ENCODE measurements at regions of chr16 and their contacts with region 1.

Region 1: DNA sequence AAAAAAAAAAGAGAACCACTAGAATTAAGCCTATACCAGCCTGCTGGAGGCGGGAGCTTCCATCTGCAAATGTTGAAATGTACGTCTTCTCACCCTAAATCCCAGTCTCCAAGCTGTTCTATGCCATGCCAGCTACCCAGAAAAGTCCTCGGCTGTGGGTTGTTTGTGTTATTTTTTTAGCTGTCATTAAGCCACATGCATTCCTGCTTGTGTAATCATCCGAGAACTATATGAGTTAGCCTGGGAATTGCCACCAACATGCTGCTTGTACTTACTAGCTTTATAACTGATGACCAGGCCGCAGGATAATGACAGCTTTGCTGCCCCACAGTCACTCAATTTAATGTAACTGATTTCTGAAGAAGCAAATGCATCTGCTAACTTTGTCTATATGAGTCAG is 313.9 kb upstream of the SALL1 start:
- DNase-seq: no peak
- H3K4me3 ChIP-seq: no peak overlapping the region
- H3K27ac ChIP-seq: no peak overlapping the region
- H3K4me1 ChIP-seq: no peaks in the 10 kb centered on the region
- H3K27me3 ChIP-seq: no peaks in the 10 kb centered on the region
- CTCF ChIP-seq: no peak
- EP300 ChIP-seq: no peak
- POLR2A ChIP-seq: no peak

Region 2: GRCh38 chr16:51359141-51359955 is 105.6 kb before region 1 on chr16:
- in situ Hi-C with region 1: loop called in 1 of 4 experiments (anchors 25 kb)
- intact Hi-C with region 1: no loop called
- DNase-seq: peak; percentile 7
- H3K4me3 ChIP-seq: no peak overlapping the region
- H3K27ac ChIP-seq: no peak overlapping the region
- H3K4me1 ChIP-seq: no peaks in the 10 kb centered on the region
- H3K27me3 ChIP-seq: no peaks in the 10 kb centered on the region
- CTCF ChIP-seq: no peak
- EP300 ChIP-seq: no peak
- POLR2A ChIP-seq: no peak

Region 3: DNA sequence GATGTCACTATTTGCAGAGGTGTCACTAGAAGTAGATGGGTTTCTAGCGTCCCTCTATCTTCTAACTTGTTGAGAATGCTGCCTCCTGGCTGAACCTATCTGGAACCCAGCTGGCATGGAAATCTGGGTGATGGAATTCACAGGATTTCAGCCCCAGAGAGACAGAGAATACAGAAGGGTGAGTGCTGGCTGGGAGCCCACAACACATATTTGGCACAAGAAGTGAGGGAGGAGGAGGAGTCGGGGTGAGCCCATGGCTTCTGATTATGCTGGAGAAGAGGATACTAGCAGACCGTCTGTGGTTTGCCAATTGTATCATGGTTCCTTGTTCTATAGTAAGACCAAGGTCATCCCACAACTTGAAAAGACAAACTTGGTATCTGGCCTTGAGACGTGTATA is 243.9 kb after region 1 on chr16:
- in situ Hi-C with region 1: no loop called
- intact Hi-C with region 1: no loop called
- DNase-seq: no peak
- H3K4me3 ChIP-seq: no peak overlapping the region
- H3K27ac ChIP-seq: no peak overlapping the region
- H3K4me1 ChIP-seq: no peaks in the 10 kb centered on the region
- H3K27me3 ChIP-seq: no peaks in the 10 kb centered on the region
- CTCF ChIP-seq: no peak
- EP300 ChIP-seq: no peak
- POLR2A ChIP-seq: no peak

Measured in transverse colon (tissue), 4 donors.